ENCODE measurements at regions of chr1 and their contacts with region 1.

Region 1: GRCh38 chr1:57711326-57711725 is 287.5 kb upstream of the DAB1 start:
- DNase-seq: peak; percentile 70
- H3K4me3 ChIP-seq: no peak overlapping the region
- H3K27ac ChIP-seq: peak overlapping the region; percentile 80
- H3K4me1 ChIP-seq: peaks cover 73% of the 10 kb centered on the region
- H3K27me3 ChIP-seq: no peaks in the 10 kb centered on the region
- CTCF ChIP-seq: no peak

Region 2: DNA sequence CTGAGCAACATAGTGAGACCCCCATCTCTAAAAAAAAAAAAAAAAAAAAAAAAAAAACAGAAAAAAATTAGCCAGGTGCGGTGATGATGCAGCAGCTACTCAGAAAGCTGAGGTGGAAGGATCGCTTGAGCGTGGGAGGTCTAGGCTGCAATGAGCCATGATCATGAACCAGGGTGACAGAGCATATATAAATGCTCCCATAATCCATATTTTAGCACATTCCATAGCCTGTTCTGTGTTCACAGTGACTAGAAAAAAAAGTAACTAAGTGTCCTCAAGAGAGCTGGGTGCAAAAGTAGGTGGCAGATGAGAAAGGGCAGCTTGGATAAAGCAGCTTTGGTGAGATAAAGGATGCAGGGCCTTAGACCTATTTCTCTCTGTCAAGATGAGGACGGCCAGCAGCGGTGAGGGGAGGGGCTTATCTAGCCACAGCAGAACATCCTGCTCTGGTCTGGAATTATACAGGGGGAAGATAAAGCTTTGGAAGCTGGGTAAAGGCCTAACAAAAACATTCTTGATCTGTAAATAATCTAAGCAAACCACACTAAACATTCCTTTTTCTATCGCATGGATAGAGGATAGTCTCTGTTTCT is 492.7 kb before region 1 on chr1:
- CTCF ChIA-PET with region 1: no interaction called
- POLR2A ChIA-PET with region 1: no interaction called
- intact Hi-C with region 1: loop called (anchors 10 kb)
- DNase-seq: no peak
- H3K4me3 ChIP-seq: no peak overlapping the region
- H3K27ac ChIP-seq: no peak overlapping the region
- H3K4me1 ChIP-seq: peaks cover 31% of the 10 kb centered on the region
- H3K27me3 ChIP-seq: no peaks in the 10 kb centered on the region
- CTCF ChIP-seq: no peak

Region 3: GRCh38 chr1:58047265-58047858 is 336.0 kb after region 1 on chr1:
- CTCF ChIA-PET with region 1: no interaction called
- POLR2A ChIA-PET with region 1: no interaction called
- intact Hi-C with region 1: loop called (anchors 2 kb)
- DNase-seq: peak; percentile 69
- H3K4me3 ChIP-seq: no peak overlapping the region
- H3K27ac ChIP-seq: no peak overlapping the region
- H3K4me1 ChIP-seq: peaks cover 9% of the 10 kb centered on the region
- H3K27me3 ChIP-seq: no peaks in the 10 kb centered on the region
- CTCF ChIP-seq: peak; percentile 92

Region 4: GRCh38 chr1:58249737-58250586 is 538.6 kb after region 1 on chr1:
- CTCF ChIA-PET with region 1: no interaction called
- POLR2A ChIA-PET with region 1: no interaction called
- intact Hi-C with region 1: loop called (anchors 5 kb)
- DNase-seq: peak; percentile 79
- H3K4me3 ChIP-seq: peak overlapping the region; percentile 57
- H3K27ac ChIP-seq: no peak overlapping the region
- H3K4me1 ChIP-seq: peaks cover 17% of the 10 kb centered on the region
- H3K27me3 ChIP-seq: no peaks in the 10 kb centered on the region
- CTCF ChIP-seq: no peak

Region 5: DNA sequence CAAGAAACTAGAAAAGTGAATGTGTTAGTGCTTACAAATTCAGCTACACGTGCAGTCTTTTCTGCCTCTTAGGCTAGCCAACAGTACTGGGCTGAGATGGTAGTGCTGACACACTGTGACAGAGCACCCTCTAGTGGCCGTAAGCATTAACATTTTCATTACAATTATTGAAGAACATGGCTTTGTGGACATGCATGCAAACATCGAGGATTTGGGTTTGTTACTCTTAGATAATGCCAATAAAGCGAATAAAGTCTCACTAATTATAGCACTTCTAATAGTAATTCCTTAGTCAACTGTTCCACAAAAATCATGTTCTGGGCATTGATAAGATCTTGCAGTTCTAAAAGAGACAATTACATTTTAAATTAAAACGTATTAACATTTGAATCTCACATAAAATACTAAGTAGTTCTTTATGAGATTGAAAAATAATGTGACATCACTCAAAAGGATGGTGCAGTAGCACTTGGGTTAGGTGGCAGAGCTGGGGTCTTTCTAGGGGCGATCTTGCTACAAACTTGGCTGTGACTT is 941.4 kb after region 1 on chr1:
- CTCF ChIA-PET with region 1: no interaction called
- POLR2A ChIA-PET with region 1: no interaction called
- intact Hi-C with region 1: loop called (anchors 5 kb)
- DNase-seq: peak; percentile 87
- H3K4me3 ChIP-seq: no peak overlapping the region
- H3K27ac ChIP-seq: no peak overlapping the region
- H3K4me1 ChIP-seq: peaks cover 4% of the 10 kb centered on the region
- H3K27me3 ChIP-seq: no peaks in the 10 kb centered on the region
- CTCF ChIP-seq: peak; percentile 86